ENCODE measurements at regions of chr6 and their contacts with region 1.

Region 1: GRCh38 chr6:155314092-155314772 is at the start of gene TFB1M:
- DNase-seq: peak; percentile 95 to 97 (median 96)
- H3K4me3 ChIP-seq: peak within 1 kb of the TSS; percentile 89 to 90 (median 89)
- H3K4me3 Mint-ChIP-seq: peak within 1 kb of the TSS; percentile 93 to 98
- H3K27ac ChIP-seq: peak within 1 kb of the TSS; percentile 97 to 99
- H3K27ac Mint-ChIP-seq: peak within 1 kb of the TSS; percentile 94 to 98 (median 96)
- H3K4me1 ChIP-seq: peaks cover 18 to 27% of the 10 kb centered on the region in 2 donors
- H3K4me1 Mint-ChIP-seq: peaks cover 19% of the 10 kb centered on the region
- H3K27me3 ChIP-seq: no peaks in the 10 kb centered on the region
- H3K27me3 Mint-ChIP-seq: no peaks in the 10 kb centered on the region
- CTCF ChIP-seq: no peak
- polyA plus RNA-seq, gene TFB1M: 4.8 to 5.4 (median 4.8) TPM

Region 2: DNA sequence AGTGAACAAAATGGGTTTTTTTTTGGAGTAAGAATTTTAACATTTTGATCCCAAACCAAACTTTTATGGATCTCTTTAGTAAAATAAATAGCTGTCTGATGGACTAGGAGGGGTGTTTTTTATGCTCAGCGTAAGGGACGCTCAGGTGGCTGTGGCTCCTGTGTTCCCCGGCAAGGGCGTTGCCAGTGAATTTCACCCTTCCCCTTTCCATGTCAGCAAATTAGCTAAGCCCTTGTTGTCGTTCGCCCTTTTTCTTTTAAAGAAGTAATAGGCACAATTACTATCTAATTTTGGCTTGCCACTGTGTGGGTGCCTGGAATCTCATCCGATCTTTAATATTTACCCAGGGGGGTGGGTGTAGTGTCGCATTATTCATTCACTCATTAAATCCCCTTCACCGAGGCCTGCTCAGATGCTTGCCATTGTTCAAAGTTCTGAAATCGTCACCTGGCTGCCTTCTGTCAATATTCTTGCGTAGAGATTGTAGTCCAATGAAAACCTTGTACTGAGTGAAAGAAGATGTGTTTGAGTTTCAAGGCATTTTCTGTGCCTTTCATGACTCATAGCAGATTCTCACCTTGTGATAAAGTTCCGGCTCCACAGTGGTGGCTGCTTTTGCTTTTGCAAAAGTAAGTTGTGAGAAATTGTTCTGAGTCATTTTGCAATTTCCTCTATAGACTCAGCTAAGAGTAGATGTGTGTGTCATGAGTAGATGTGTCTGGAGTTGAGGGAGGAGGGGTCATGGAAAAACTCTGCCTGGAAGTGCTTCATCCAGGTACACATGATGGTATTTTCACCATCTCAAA is 90.4 kb before region 1 on chr6:
- intact Hi-C with region 1: loop called in 1 of 2 experiments (anchors 5 kb)
- DNase-seq: peak; percentile 84 to 94 (median 92)
- H3K4me3 ChIP-seq: peak overlapping the region in 1 of 3 experiments; percentile 51
- H3K4me3 Mint-ChIP-seq: peak overlapping the region; percentile 1 to 62
- H3K27ac ChIP-seq: peak overlapping the region; percentile 72 to 88
- H3K27ac Mint-ChIP-seq: peak overlapping the region; percentile 89 to 99 (median 94)
- H3K4me1 ChIP-seq: peaks cover 53 to 56% of the 10 kb centered on the region in 2 donors
- H3K4me1 Mint-ChIP-seq: peaks cover 55% of the 10 kb centered on the region
- H3K27me3 ChIP-seq: no peaks in the 10 kb centered on the region
- H3K27me3 Mint-ChIP-seq: peaks cover 0 to 5% (median 2%) of the 10 kb centered on the region in 3 donors
- CTCF ChIP-seq: no peak

Region 3: GRCh38 chr6:155543166-155543847 is 229.1 kb after region 1 on chr6:
- intact Hi-C with region 1: no loop called
- DNase-seq: no peak
- H3K4me3 ChIP-seq: no peak overlapping the region
- H3K4me3 Mint-ChIP-seq: no peak overlapping the region
- H3K27ac ChIP-seq: no peak overlapping the region
- H3K27ac Mint-ChIP-seq: no peak overlapping the region
- H3K4me1 ChIP-seq: no peaks in the 10 kb centered on the region
- H3K4me1 Mint-ChIP-seq: no peaks in the 10 kb centered on the region
- H3K27me3 ChIP-seq: no peaks in the 10 kb centered on the region
- H3K27me3 Mint-ChIP-seq: peaks cover 0 to 4% (median 1%) of the 10 kb centered on the region in 3 donors
- CTCF ChIP-seq: no peak

Measured in CD14-positive monocyte (primary cell).